ENCODE measurements at regions of chr1 and their contacts with region 1.

Region 1: GRCh38 chr1:235971571-235972310 is 93.1 kb downstream of the NID1 start:
- DNase-seq: peak; percentile 75 to 92 (median 84)
- ATAC-seq: peak; percentile 99
- H3K4me3 ChIP-seq: peak overlapping the region; percentile 13
- H3K4me3 Mint-ChIP-seq: peak overlapping the region; percentile 55
- H3K27ac ChIP-seq: peak overlapping the region in 1 of 2 donors; percentile 14
- H3K27ac Mint-ChIP-seq: peak overlapping the region; percentile 75
- H3K4me1 ChIP-seq: peaks cover 12% of the 10 kb centered on the region
- H3K4me1 Mint-ChIP-seq: peaks cover 17% of the 10 kb centered on the region
- H3K27me3 ChIP-seq: no peaks in the 10 kb centered on the region
- H3K27me3 Mint-ChIP-seq: no peaks in the 10 kb centered on the region
- CTCF ChIP-seq: peak; percentile 84

Region 2: GRCh38 chr1:235513495-235514366 is 458.0 kb before region 1 on chr1:
- CTCF ChIA-PET with region 1: no interaction called
- POLR2A ChIA-PET with region 1: no interaction called
- intact Hi-C with region 1: loop called (anchors 1 to 2 kb)
- DNase-seq: peak in 6 of 14 experiments; percentile 5 to 82 (median 62)
- ATAC-seq: peak; percentile 68
- H3K4me3 ChIP-seq: no peak overlapping the region
- H3K4me3 Mint-ChIP-seq: no peak overlapping the region
- H3K27ac ChIP-seq: no peak overlapping the region
- H3K27ac Mint-ChIP-seq: no peak overlapping the region
- H3K4me1 ChIP-seq: no peaks in the 10 kb centered on the region
- H3K4me1 Mint-ChIP-seq: no peaks in the 10 kb centered on the region
- H3K27me3 ChIP-seq: no peaks in the 10 kb centered on the region
- H3K27me3 Mint-ChIP-seq: peaks cover 4% of the 10 kb centered on the region
- CTCF ChIP-seq: peak; percentile 91

Region 3: DNA sequence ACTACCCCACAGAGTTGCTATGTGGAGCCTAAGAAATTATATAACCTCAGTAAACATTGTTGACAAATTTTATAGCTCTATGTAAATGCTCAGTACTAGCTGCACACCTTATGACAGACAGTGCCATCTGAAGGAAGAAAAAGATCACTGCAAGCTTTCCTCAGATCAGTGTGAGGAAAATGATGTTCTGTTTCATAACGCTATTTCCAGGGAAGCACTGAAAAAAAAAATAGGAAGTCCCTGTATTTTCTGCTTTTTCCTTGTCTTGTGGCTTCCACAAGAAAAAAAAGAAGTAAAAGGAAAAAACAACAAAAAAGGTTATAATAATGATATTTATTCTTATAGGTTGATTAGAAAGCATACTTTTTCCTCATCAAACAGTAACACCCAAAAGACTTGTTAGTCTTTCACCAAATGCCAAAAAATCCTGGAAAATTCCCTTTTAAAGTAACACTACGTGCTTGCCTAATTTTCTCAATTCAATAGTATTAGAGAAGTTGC is 128.2 kb before region 1 on chr1:
- CTCF ChIA-PET with region 1: interaction called, 11 read pairs
- POLR2A ChIA-PET with region 1: interaction called, 6 read pairs
- intact Hi-C with region 1: loop called in 1 of 2 experiments (anchors 5 kb)
- DNase-seq: peak in 3 of 14 experiments; percentile 47 to 50 (median 47)
- ATAC-seq: peak; percentile 78
- H3K4me3 ChIP-seq: no peak overlapping the region
- H3K4me3 Mint-ChIP-seq: no peak overlapping the region
- H3K27ac ChIP-seq: no peak overlapping the region
- H3K27ac Mint-ChIP-seq: no peak overlapping the region
- H3K4me1 ChIP-seq: peaks cover 11% of the 10 kb centered on the region
- H3K4me1 Mint-ChIP-seq: peaks cover 54% of the 10 kb centered on the region
- H3K27me3 ChIP-seq: no peaks in the 10 kb centered on the region
- H3K27me3 Mint-ChIP-seq: no peaks in the 10 kb centered on the region
- CTCF ChIP-seq: peak; percentile 37

Region 4: DNA sequence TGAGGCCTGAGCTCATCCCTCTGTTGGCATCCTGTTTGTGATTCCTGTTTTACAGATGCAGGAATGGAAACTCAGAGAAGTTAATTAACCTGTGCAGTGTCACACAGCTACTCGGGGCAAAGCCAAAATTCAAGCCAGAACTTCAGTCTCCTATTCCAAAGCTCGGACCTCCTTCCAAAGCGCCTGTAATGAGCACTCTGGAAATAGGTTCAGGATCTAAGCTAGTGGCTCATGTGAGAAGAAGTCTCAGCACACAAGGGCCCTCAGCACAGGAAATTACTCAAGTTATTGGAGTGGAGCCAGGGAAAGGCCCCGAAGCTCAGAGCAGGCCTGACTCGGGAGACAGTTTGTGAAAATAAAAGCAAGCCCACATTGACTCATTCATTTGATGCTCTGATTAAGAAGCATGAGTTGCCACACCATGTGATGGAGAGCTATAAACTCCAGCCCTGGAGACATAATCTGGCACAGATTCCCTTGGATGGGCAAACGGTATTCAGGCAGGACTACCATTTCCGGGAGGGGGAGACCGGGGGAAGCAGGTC is 54.4 kb before region 1 on chr1:
- CTCF ChIA-PET with region 1: interaction called, 12 read pairs
- POLR2A ChIA-PET with region 1: interaction called, 6 read pairs
- intact Hi-C with region 1: loop called in 1 of 2 experiments (anchors 10 kb)
- DNase-seq: peak; percentile 7 to 88 (median 47)
- ATAC-seq: peak; percentile 95
- H3K4me3 ChIP-seq: no peak overlapping the region
- H3K4me3 Mint-ChIP-seq: no peak overlapping the region
- H3K27ac ChIP-seq: no peak overlapping the region
- H3K27ac Mint-ChIP-seq: peak overlapping the region; percentile 34
- H3K4me1 ChIP-seq: peaks cover 19% of the 10 kb centered on the region
- H3K4me1 Mint-ChIP-seq: peaks cover 10% of the 10 kb centered on the region
- H3K27me3 ChIP-seq: no peaks in the 10 kb centered on the region
- H3K27me3 Mint-ChIP-seq: no peaks in the 10 kb centered on the region
- CTCF ChIP-seq: no peak

Region 5: GRCh38 chr1:235943581-235944114 is 28.1 kb before region 1 on chr1:
- CTCF ChIA-PET with region 1: interaction called, 10 read pairs
- POLR2A ChIA-PET with region 1: no interaction called
- intact Hi-C with region 1: no loop called
- DNase-seq: peak in 1 of 14 experiments; percentile 39
- ATAC-seq: no peak
- H3K4me3 ChIP-seq: no peak overlapping the region
- H3K4me3 Mint-ChIP-seq: no peak overlapping the region
- H3K27ac ChIP-seq: no peak overlapping the region
- H3K27ac Mint-ChIP-seq: no peak overlapping the region
- H3K4me1 ChIP-seq: peaks cover 21% of the 10 kb centered on the region
- H3K4me1 Mint-ChIP-seq: peaks cover 17% of the 10 kb centered on the region
- H3K27me3 ChIP-seq: no peaks in the 10 kb centered on the region
- H3K27me3 Mint-ChIP-seq: no peaks in the 10 kb centered on the region
- CTCF ChIP-seq: no peak

Region 6: DNA sequence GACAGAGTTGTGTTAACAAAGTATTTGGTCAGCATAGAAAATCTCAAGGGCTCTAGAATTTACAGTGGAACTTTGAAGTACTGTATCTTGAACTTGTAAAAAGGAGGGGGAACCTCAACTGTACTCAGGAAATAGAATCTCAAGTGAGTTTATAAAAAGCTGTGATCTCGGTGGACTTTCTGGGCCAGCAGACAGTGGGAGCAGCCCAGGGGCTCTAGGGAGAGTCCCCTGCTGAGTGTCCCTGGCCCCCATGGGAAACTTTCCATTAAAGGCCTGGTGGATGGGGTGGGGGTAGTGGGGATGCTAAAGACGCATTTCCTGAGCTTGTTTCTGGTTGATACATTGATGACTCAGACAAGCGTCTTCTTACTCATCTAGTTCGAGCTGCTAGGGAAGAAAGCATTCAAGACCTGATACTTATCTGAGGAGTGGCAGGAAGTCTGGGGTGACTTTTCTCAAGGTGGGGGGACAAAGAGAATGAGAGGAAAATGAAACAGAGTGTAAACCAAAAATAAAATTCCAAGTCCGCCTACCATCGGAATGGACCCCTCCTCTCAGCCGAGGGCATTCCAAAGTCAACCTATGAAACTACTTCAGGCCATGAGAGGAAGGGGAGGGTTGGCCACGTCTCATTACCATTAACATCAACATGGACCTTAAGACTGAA is 27.7 kb after region 1 on chr1:
- CTCF ChIA-PET with region 1: interaction called, 18 read pairs
- POLR2A ChIA-PET with region 1: interaction called, 16 read pairs
- intact Hi-C with region 1: no loop called
- DNase-seq: peak; percentile 37 to 93 (median 59)
- ATAC-seq: peak; percentile 81
- H3K4me3 ChIP-seq: no peak overlapping the region
- H3K4me3 Mint-ChIP-seq: peak overlapping the region; percentile 13
- H3K27ac ChIP-seq: peak overlapping the region; percentile 77 to 78
- H3K27ac Mint-ChIP-seq: peak overlapping the region; percentile 86
- H3K4me1 ChIP-seq: peaks cover 57% of the 10 kb centered on the region
- H3K4me1 Mint-ChIP-seq: peaks cover 32% of the 10 kb centered on the region
- H3K27me3 ChIP-seq: no peaks in the 10 kb centered on the region
- H3K27me3 Mint-ChIP-seq: no peaks in the 10 kb centered on the region
- CTCF ChIP-seq: no peak

Measured in CD4-positive, alpha-beta T cell (primary cell).